ENCODE measurements at regions of chr7 and their contacts with region 1.

Region 1: GRCh38 chr7:9324513-9324912 is 891.1 kb downstream of the NXPH1 start:
- DNase-seq: no peak
- ATAC-seq: no peak
- H3K4me3 ChIP-seq: no peak overlapping the region
- H3K27ac ChIP-seq: no peak overlapping the region
- H3K4me1 ChIP-seq: no peaks in the 10 kb centered on the region
- H3K27me3 ChIP-seq: no peaks in the 10 kb centered on the region
- CTCF ChIP-seq: no peak
- EP300 ChIP-seq: no peak
- POLR2A ChIP-seq: no peak
- RAD21 ChIP-seq: no peak

Region 2: DNA sequence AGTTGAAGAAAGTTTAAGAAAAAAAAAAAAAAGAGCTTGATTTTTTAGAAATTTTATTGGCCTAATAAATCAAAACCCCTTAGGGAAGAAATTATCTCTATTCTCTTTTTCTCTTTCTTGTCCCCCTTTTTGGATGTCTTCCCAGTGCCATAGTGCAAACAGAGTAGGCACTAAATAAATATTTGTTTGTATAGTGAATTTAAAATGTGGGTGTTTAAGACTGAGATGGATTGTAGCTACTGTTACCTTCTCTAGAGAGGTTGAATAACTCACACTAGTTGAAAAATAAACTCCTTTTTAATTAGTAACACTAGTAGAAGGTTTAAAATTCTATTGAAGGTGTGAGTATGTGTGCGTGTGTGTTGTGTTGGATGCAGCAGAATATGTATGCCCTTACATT is 107.3 kb before region 1 on chr7:
- CTCF ChIA-PET with region 1: no interaction called
- POLR2A ChIA-PET with region 1: no interaction called
- RAD21 ChIA-PET with region 1: no interaction called
- SMC1A ChIA-PET with region 1: no interaction called
- in situ Hi-C with region 1: no loop called
- intact Hi-C with region 1: no loop called
- DNase-seq: no peak
- ATAC-seq: no peak
- H3K4me3 ChIP-seq: no peak overlapping the region
- H3K27ac ChIP-seq: no peak overlapping the region
- H3K4me1 ChIP-seq: no peaks in the 10 kb centered on the region
- H3K27me3 ChIP-seq: no peaks in the 10 kb centered on the region
- CTCF ChIP-seq: no peak
- EP300 ChIP-seq: no peak
- POLR2A ChIP-seq: no peak
- RAD21 ChIP-seq: no peak

Region 3: DNA sequence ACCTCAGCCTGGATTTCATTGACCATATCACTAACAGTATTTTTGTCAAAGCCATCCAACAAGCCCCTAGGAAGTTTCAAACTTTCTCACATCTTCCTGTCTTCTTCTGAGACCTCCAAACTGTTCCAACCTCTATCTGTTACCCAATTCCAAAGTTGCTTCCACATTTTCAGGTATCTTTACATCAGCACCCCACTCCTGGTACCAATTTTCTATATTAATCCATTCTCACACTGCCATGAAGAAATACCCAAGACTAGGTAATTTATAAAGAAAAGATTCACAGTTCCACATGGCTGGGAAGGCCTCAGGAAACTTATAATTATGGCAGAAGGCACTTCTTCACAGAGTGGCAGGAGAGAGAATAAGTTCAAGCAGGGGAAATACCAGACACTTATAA is 1077.3 kb after region 1 on chr7:
- CTCF ChIA-PET with region 1: no interaction called
- POLR2A ChIA-PET with region 1: no interaction called
- RAD21 ChIA-PET with region 1: no interaction called
- SMC1A ChIA-PET with region 1: no interaction called
- in situ Hi-C with region 1: no loop called
- intact Hi-C with region 1: loop called (anchors 5 kb)
- DNase-seq: no peak
- ATAC-seq: no peak
- H3K4me3 ChIP-seq: no peak overlapping the region
- H3K27ac ChIP-seq: no peak overlapping the region
- H3K4me1 ChIP-seq: no peaks in the 10 kb centered on the region
- H3K27me3 ChIP-seq: no peaks in the 10 kb centered on the region
- CTCF ChIP-seq: no peak
- EP300 ChIP-seq: no peak
- POLR2A ChIP-seq: no peak
- RAD21 ChIP-seq: no peak

Measured in GM12878 (cell line).